CD14-positive monocyte (primary cell): ENCODE measurements at regions of chr17 and their contacts with region 1.

Region 1: DNA sequence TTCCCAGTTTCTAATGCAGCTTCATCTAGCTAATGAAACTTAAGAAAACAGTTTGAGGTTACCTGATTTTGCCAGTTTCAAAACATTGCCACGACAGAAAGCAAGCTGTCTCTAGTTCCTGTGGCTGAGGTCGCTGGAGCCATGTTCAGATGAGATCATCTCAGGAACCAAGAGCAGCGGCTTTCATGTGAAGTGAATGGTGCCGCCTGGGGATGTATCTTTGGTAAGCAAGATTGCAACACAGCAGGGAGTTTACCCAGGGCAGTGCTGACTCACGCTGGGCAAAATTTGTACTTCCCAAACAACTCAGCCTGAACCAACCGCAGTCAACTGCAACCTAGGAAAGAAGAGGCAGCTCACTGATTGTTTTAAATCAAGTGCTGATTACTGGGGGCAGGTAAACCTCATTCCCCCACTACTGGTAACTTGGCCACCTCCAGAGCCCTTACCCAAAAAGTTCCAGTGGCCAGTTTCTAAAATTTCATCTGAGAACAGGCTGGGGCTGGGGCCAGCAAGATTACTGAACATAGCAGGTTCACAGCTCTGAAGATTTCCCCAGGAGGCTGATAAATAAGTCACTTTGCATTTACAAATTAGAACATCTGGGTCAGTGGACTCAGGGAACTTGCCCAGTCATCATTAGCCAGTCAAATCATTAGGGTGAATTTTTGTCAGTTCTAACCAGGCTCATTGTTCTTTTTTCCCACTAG is at the start of gene RFFL:
- DNase-seq: peak; percentile 95 to 99 (median 98)
- H3K4me3 ChIP-seq: peak within 1 kb of the TSS; percentile 30 to 81 (median 61)
- H3K4me3 Mint-ChIP-seq: peak within 1 kb of the TSS; percentile 71 to 73
- H3K27ac ChIP-seq: peak within 1 kb of the TSS; percentile 93 to 96
- H3K27ac Mint-ChIP-seq: peak within 1 kb of the TSS; percentile 95 to 99 (median 97)
- H3K4me1 ChIP-seq: peaks cover 43 to 58% of the 10 kb centered on the region in 2 donors
- H3K4me1 Mint-ChIP-seq: peaks cover 67% of the 10 kb centered on the region
- H3K27me3 ChIP-seq: no peaks in the 10 kb centered on the region
- H3K27me3 Mint-ChIP-seq: no peaks in the 10 kb centered on the region
- CTCF ChIP-seq: no peak
- polyA plus RNA-seq, gene RFFL: 16.1 to 25.1 (median 24.7) TPM

Region 2: GRCh38 chr17:35028531-35029262 is 35.0 kb before region 1 on chr17:
- intact Hi-C with region 1: loop called in 1 of 2 experiments (anchors 5 kb)
- DNase-seq: peak in 2 of 3 donors; percentile 60 to 66
- H3K4me3 ChIP-seq: no peak overlapping the region
- H3K4me3 Mint-ChIP-seq: no peak overlapping the region
- H3K27ac ChIP-seq: peak overlapping the region in 1 of 2 donors; percentile 64
- H3K27ac Mint-ChIP-seq: peak overlapping the region in 6 of 7 donors; percentile 54 to 91 (median 82)
- H3K4me1 ChIP-seq: peaks cover 14 to 16% of the 10 kb centered on the region in 2 donors
- H3K4me1 Mint-ChIP-seq: peaks cover 22% of the 10 kb centered on the region
- H3K27me3 ChIP-seq: no peaks in the 10 kb centered on the region
- H3K27me3 Mint-ChIP-seq: peaks cover 0 to 1% (median 0%) of the 10 kb centered on the region in 3 donors
- CTCF ChIP-seq: no peak

Region 3: GRCh38 chr17:35103271-35103670 is 39.6 kb after region 1 on chr17:
- intact Hi-C with region 1: no loop called
- DNase-seq: no peak
- H3K4me3 ChIP-seq: no peak overlapping the region
- H3K4me3 Mint-ChIP-seq: no peak overlapping the region
- H3K27ac ChIP-seq: no peak overlapping the region
- H3K27ac Mint-ChIP-seq: peak overlapping the region in 1 of 7 donors; percentile 38
- H3K4me1 ChIP-seq: peaks cover 14 to 16% of the 10 kb centered on the region in 2 donors
- H3K4me1 Mint-ChIP-seq: peaks cover 23% of the 10 kb centered on the region
- H3K27me3 ChIP-seq: no peaks in the 10 kb centered on the region
- H3K27me3 Mint-ChIP-seq: peaks cover 0 to 2% (median 1%) of the 10 kb centered on the region in 3 donors
- CTCF ChIP-seq: no peak

Region 4: DNA sequence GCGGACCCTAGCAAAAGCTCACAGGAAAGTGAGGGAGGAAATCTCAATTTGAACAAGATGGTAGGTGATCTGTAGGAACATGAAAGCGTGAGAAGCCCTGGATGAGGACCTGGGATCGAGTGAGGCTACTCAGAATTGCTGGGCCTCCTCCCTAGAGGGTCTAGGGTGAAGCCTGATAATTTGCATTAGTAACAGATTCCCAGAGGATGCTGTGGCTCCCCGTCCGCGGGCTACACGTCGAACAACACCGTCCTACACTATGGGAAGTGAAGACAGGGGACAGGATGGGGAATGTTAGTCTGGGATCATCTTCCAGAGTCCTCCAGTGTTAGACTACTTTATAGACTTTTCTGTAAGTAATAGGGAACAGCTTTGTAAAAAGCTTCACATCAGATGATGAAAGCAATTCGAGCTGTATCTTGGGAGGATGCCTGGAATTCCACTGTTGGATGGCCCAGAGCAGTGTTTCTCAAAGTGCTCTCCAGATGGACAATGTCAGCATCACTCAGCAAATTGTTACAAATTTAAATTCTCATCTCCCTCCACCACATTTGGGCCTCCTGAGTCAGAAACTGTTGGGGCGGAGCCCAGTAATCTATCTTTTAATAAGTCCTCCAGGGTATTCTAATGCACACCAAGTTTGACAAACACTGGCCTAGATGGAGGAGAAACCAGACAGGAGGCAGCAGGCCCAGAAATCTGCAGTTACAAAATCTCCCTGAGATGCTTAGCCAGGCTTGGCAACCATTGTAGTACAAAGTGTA is 64.3 kb after region 1 on chr17:
- intact Hi-C with region 1: no loop called
- DNase-seq: no peak
- H3K4me3 ChIP-seq: no peak overlapping the region
- H3K4me3 Mint-ChIP-seq: no peak overlapping the region
- H3K27ac ChIP-seq: no peak overlapping the region
- H3K27ac Mint-ChIP-seq: no peak overlapping the region
- H3K4me1 ChIP-seq: no peaks in the 10 kb centered on the region
- H3K4me1 Mint-ChIP-seq: no peaks in the 10 kb centered on the region
- H3K27me3 ChIP-seq: no peaks in the 10 kb centered on the region
- H3K27me3 Mint-ChIP-seq: no peaks in the 10 kb centered on the region
- CTCF ChIP-seq: no peak

Region 5: DNA sequence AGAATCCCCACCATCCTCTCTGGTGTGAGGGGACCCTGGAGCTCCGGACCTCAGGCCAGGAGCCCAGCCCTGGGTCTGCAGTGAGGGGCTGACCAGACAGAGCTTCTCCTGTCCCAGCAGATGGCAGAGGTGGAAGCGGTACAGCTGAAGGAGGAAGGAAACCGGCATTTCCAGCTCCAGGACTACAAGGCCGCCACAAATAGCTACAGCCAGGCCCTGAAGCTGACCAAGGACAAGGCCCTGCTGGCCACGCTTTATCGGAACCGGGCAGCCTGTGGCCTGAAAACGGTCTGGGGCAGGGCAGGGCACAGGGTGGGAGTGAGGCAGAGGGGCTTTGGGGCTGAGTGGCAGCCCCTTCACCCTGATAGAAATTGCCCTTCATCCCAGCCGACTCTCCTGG is 84.5 kb after region 1 on chr17:
- intact Hi-C with region 1: no loop called
- DNase-seq: no peak
- H3K4me3 ChIP-seq: no peak overlapping the region
- H3K4me3 Mint-ChIP-seq: no peak overlapping the region
- H3K27ac ChIP-seq: no peak overlapping the region
- H3K27ac Mint-ChIP-seq: no peak overlapping the region
- H3K4me1 ChIP-seq: no peaks in the 10 kb centered on the region
- H3K4me1 Mint-ChIP-seq: no peaks in the 10 kb centered on the region
- H3K27me3 ChIP-seq: no peaks in the 10 kb centered on the region
- H3K27me3 Mint-ChIP-seq: peaks cover 5 to 11% (median 8%) of the 10 kb centered on the region in 3 donors
- CTCF ChIP-seq: no peak